Vagina (tissue), 2 donors: ENCODE measurements at regions of chr17 and their contacts with region 1.

Region 1: GRCh38 chr17:43024407-43025289 is at the start of gene RND2:
- DNase-seq: peak in 1 of 2 donors; percentile 97
- H3K4me3 ChIP-seq: peak within 1 kb of the TSS; percentile 57 to 78
- H3K27ac ChIP-seq: peak within 1 kb of the TSS; percentile 85
- H3K4me1 ChIP-seq: peaks cover 54% of the 10 kb centered on the region
- H3K27me3 ChIP-seq: no peaks in the 10 kb centered on the region
- CTCF ChIP-seq: peak; percentile 33 to 73 (median 47)
- POLR2A ChIP-seq: peak in 1 of 2 donors; percentile 61
- total RNA-seq, gene RND2: 1.5 TPM

Region 2: DNA sequence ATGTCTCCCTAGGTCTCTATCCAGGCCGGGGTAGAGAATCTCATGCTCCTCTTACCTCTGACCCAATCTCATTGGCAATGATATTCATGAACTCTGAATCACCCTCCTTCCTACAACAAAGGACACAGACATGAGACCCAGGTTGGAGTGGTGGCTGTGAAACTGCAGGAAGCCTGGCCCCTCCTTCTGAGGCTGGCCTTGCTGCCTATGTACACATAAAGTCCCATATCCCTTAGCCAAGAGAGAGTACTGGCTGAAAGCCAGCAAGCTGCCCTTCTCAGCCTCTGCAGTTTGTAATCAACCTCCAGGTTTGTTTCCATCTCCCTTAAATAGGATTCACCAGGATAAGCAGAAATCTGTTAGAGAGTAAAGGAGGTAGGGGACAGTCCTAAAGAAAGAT is 71.0 kb before region 1 on chr17:
- intact Hi-C with region 1: no loop called
- DNase-seq: no peak
- H3K4me3 ChIP-seq: no peak overlapping the region
- H3K27ac ChIP-seq: no peak overlapping the region
- H3K4me1 ChIP-seq: no peaks in the 10 kb centered on the region
- H3K27me3 ChIP-seq: no peaks in the 10 kb centered on the region
- CTCF ChIP-seq: no peak
- POLR2A ChIP-seq: no peak

Region 3: DNA sequence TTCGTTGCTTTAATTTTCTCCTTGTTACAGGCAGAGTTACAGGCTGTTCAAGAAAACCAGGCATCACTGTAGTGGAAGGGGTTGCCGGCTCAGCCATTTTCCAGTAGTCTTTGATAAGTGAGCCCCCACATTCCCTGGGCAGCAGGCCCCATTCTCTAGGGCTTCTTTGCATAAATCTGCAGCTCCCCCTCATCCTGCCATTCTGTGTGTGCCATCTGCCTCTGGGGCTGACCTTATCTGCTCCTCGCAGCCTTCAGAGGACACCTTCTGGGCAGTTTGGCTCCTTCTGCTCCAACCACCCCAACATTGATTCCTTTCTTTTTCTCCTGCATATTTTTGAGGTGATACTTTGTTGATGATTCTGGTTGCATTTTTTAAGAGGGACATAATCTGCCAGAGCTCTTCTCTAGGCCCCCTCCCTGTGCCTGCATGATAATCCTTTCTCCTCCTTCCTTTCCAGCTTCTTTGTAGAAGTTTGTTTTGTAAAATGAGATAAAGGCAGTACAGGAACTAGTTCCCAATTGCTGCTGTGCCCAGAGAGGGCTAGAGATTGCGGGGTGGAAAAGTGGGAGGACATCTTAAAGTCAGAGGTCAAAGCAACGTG is 17.5 kb after region 1 on chr17:
- intact Hi-C with region 1: no loop called
- DNase-seq: no peak
- H3K4me3 ChIP-seq: no peak overlapping the region
- H3K27ac ChIP-seq: no peak overlapping the region
- H3K4me1 ChIP-seq: no peaks in the 10 kb centered on the region
- H3K27me3 ChIP-seq: no peaks in the 10 kb centered on the region
- CTCF ChIP-seq: no peak
- POLR2A ChIP-seq: no peak

Region 4: GRCh38 chr17:43125133-43125966 is 100.7 kb after region 1 on chr17 and contains the start of gene BRCA1:
- intact Hi-C with region 1: loop called (anchors 10 kb)
- DNase-seq: peak in 1 of 2 donors; percentile 98
- H3K4me3 ChIP-seq: peak within 1 kb of the TSS; percentile 59 to 71
- H3K27ac ChIP-seq: peak within 1 kb of the TSS; percentile 62
- H3K4me1 ChIP-seq: peaks cover 31% of the 10 kb centered on the region
- H3K27me3 ChIP-seq: no peaks in the 10 kb centered on the region
- CTCF ChIP-seq: no peak
- POLR2A ChIP-seq: peak in 1 of 2 donors; percentile 46
- total RNA-seq, gene BRCA1: 6.6 TPM

Region 5: GRCh38 chr17:43140396-43141332 is 116.0 kb after region 1 on chr17:
- intact Hi-C with region 1: no loop called
- DNase-seq: no peak
- H3K4me3 ChIP-seq: no peak overlapping the region
- H3K27ac ChIP-seq: no peak overlapping the region
- H3K4me1 ChIP-seq: no peaks in the 10 kb centered on the region
- H3K27me3 ChIP-seq: no peaks in the 10 kb centered on the region
- CTCF ChIP-seq: no peak
- POLR2A ChIP-seq: no peak

Region 6: GRCh38 chr17:43170766-43171585 is 146.3 kb after region 1 on chr17 and contains the start of gene NBR1:
- intact Hi-C with region 1: loop called (anchors 2 kb)
- DNase-seq: peak; percentile 98 to 99
- H3K4me3 ChIP-seq: peak within 1 kb of the TSS; percentile 48 to 84
- H3K27ac ChIP-seq: peak within 1 kb of the TSS; percentile 99
- H3K4me1 ChIP-seq: peaks cover 61% of the 10 kb centered on the region
- H3K27me3 ChIP-seq: no peaks in the 10 kb centered on the region
- CTCF ChIP-seq: no peak
- POLR2A ChIP-seq: no peak
- total RNA-seq, gene NBR1: 58.9 TPM

Region 7: DNA sequence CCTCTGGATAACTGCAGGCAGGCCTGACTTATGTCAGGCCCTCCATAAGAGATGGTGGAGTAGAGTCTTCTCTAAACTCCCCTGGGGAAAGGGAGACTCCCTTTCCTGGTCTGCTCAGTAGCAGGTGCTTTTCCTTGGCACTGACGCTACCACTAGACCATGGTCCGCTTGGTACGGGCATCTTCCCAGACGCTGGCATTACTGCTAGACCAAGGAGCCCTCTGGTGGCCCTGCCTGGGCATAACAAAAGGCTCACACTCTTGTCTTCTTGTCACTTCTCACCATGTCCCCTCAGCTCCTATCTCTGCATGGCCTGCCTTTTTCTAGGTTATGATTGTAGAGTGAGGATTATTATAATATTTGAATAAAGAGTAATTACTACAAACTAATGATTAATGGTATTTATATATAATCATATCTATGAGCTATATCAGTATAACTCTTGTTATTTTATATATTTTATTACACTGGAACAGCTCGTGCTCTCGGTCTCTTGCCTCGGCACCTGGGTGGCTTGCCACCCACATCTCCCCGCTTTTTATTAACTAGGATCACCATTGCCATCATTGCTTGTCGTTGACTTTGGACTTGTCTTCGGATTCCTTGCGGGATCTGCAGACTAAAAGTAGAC is 314.4 kb after region 1 on chr17:
- intact Hi-C with region 1: loop called (anchors 10 kb)
- DNase-seq: no peak
- H3K4me3 ChIP-seq: no peak overlapping the region
- H3K27ac ChIP-seq: no peak overlapping the region
- H3K4me1 ChIP-seq: peaks cover 3% of the 10 kb centered on the region
- H3K27me3 ChIP-seq: no peaks in the 10 kb centered on the region
- CTCF ChIP-seq: peak; percentile 35 to 41 (median 40)
- POLR2A ChIP-seq: no peak